Naive thymus-derived CD4-positive, alpha-beta T cell (primary cell): ENCODE measurements at regions of chr6 and their contacts with region 1.

Region 1: DNA sequence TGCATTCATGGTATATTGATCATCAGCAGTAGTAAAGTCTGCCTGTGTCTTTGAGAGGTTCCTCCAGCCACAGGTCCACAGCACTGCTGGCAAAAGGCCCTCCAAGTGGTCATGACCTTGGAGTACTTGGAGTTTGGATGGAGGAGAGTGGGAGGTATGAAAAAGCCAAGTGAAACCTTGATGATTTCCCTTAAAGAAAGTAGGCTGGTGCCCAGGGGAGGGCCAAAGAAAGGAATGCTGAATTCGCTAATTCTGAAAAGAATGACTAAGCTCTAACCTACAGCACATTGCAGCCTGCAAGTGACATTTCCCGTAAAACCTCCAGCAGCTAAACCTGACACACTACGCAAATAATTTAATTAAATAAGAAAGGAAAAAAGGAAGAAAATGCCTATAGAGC is 223.4 kb upstream of the TAB2 start:
- DNase-seq: no peak
- ATAC-seq: no peak
- H3K4me3 ChIP-seq: no peak overlapping the region
- H3K4me3 Mint-ChIP-seq: peak overlapping the region; percentile 13 to 85 (median 66)
- H3K27ac ChIP-seq: peak overlapping the region; percentile 32
- H3K27ac Mint-ChIP-seq: peak overlapping the region; percentile 13 to 98 (median 82)
- H3K4me1 ChIP-seq: peaks cover 26 to 36% of the 10 kb centered on the region in 2 donors
- H3K4me1 Mint-ChIP-seq: peaks cover 25 to 75% (median 52%) of the 10 kb centered on the region in 7 donors
- H3K27me3 ChIP-seq: no peaks in the 10 kb centered on the region
- H3K27me3 Mint-ChIP-seq: no peaks in the 10 kb centered on the region

Region 2: DNA sequence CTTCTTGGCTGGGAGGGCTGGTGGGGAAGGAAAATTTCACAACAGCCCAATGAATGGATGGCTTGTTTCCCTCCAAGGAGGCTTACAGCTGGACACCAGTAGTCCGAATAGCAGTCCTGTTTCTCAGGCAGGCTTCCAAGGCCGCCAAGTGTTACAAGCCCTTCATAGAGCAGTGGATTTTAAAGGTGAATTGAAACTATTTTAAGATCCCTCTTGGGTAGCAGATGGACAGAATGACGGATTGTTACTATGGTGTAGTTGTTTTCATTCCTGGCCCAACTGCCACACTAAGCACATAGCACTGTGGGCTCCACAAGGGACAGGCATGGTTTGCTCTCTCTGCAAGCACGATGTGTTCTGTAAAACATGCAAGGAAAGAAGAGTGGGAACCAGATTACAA is 20.0 kb after region 1 on chr6:
- CTCF ChIA-PET with region 1: no interaction called
- POLR2A ChIA-PET with region 1: interaction called, 4 read pairs
- intact Hi-C with region 1: loop called in 1 of 2 experiments (anchors 2 kb)
- DNase-seq: no peak
- ATAC-seq: no peak
- H3K4me3 ChIP-seq: no peak overlapping the region
- H3K4me3 Mint-ChIP-seq: peak overlapping the region in 1 of 10 donors; percentile 25
- H3K27ac ChIP-seq: no peak overlapping the region
- H3K27ac Mint-ChIP-seq: peak overlapping the region in 3 of 9 donors; percentile 71 to 77 (median 72)
- H3K4me1 ChIP-seq: peaks cover 0 to 5% of the 10 kb centered on the region in 2 donors
- H3K4me1 Mint-ChIP-seq: peaks cover 13 to 90% (median 32%) of the 10 kb centered on the region in 7 donors
- H3K27me3 ChIP-seq: no peaks in the 10 kb centered on the region
- H3K27me3 Mint-ChIP-seq: no peaks in the 10 kb centered on the region

Region 3: DNA sequence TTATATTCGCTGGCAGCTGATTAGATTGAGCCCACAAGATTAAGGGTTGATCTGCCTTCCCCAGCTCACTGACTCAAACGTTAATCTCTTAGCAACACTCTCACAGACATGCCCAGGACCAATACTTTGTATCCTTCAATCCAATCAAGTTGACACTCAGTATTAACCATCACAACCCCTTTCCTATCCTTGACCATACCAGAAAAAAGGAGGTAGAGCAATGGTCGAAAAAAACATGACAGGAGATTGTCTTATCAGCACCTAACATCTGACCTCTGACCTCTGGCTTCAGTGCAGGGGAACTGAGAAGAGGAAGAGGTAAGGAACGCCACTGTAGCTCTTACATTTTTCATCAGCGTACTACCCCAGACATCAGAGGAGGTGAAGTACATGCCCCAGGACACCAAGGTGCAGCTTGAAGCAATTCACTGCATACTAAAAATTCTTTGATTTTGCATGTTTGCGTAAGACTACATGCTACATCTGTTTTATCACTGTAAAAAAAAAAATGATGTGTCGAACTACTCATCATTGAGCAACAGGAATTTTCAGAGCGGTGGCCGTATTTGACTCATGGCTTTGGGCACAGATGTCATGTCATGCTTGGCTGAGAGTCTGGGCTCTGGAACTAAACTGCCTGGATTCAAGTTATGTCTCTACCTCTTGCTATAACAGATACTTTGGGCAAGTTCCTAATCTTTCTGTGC is 35.4 kb after region 1 on chr6:
- CTCF ChIA-PET with region 1: interaction called, 4 read pairs
- POLR2A ChIA-PET with region 1: interaction called, 4 read pairs
- intact Hi-C with region 1: loop called in 1 of 2 experiments (anchors 2 kb)
- DNase-seq: no peak
- ATAC-seq: peak; percentile 62
- H3K4me3 ChIP-seq: no peak overlapping the region
- H3K4me3 Mint-ChIP-seq: peak overlapping the region in 6 of 10 donors; percentile 2 to 66 (median 30)
- H3K27ac ChIP-seq: peak overlapping the region; percentile 45
- H3K27ac Mint-ChIP-seq: peak overlapping the region; percentile 76 to 99 (median 91)
- H3K4me1 ChIP-seq: peaks cover 28 to 47% of the 10 kb centered on the region in 2 donors
- H3K4me1 Mint-ChIP-seq: peaks cover 40 to 83% (median 79%) of the 10 kb centered on the region in 7 donors
- H3K27me3 ChIP-seq: no peaks in the 10 kb centered on the region
- H3K27me3 Mint-ChIP-seq: no peaks in the 10 kb centered on the region

Region 4: GRCh38 chr6:149147938-149148718 is 54.0 kb after region 1 on chr6:
- CTCF ChIA-PET with region 1: no interaction called
- POLR2A ChIA-PET with region 1: no interaction called
- intact Hi-C with region 1: loop called in 1 of 2 experiments (anchors 2 kb)
- DNase-seq: peak in 7 of 9 donors; percentile 31 to 82 (median 56)
- ATAC-seq: peak; percentile 91
- H3K4me3 ChIP-seq: no peak overlapping the region
- H3K4me3 Mint-ChIP-seq: peak overlapping the region in 7 of 10 donors; percentile 7 to 69 (median 54)
- H3K27ac ChIP-seq: peak overlapping the region; percentile 64
- H3K27ac Mint-ChIP-seq: peak overlapping the region; percentile 80 to 97 (median 85)
- H3K4me1 ChIP-seq: peaks cover 26 to 29% of the 10 kb centered on the region in 2 donors
- H3K4me1 Mint-ChIP-seq: peaks cover 35 to 88% (median 55%) of the 10 kb centered on the region in 7 donors
- H3K27me3 ChIP-seq: no peaks in the 10 kb centered on the region
- H3K27me3 Mint-ChIP-seq: no peaks in the 10 kb centered on the region

Region 5: GRCh38 chr6:149223904-149224351 is 129.8 kb after region 1 on chr6:
- CTCF ChIA-PET with region 1: no interaction called
- POLR2A ChIA-PET with region 1: no interaction called
- intact Hi-C with region 1: loop called in 1 of 2 experiments (anchors 5 kb)
- DNase-seq: no peak
- ATAC-seq: no peak
- H3K4me3 ChIP-seq: no peak overlapping the region
- H3K4me3 Mint-ChIP-seq: no peak overlapping the region
- H3K27ac ChIP-seq: no peak overlapping the region
- H3K27ac Mint-ChIP-seq: peak overlapping the region in 3 of 9 donors; percentile 3 to 88 (median 33)
- H3K4me1 ChIP-seq: no peaks in the 10 kb centered on the region
- H3K4me1 Mint-ChIP-seq: peaks cover 4 to 54% (median 23%) of the 10 kb centered on the region in 7 donors
- H3K27me3 ChIP-seq: no peaks in the 10 kb centered on the region
- H3K27me3 Mint-ChIP-seq: no peaks in the 10 kb centered on the region